Activated CD8-positive, alpha-beta memory T cell treated with anti-CD3 and anti-CD28 coated beads, Interleukin-2, amount 10 ng/mL, durations not matched to agents 7 days and 5 days (primary cell): ENCODE measurements at regions of chr6 and their contacts with region 1.

Region 1: GRCh38 chr6:34610819-34611477 is 54.8 kb upstream of the SPDEF start:
- DNase-seq: no peak
- ATAC-seq: no peak
- H3K4me3 Mint-ChIP-seq: no peak overlapping the region
- H3K27ac Mint-ChIP-seq: no peak overlapping the region
- H3K4me1 Mint-ChIP-seq: peaks cover 19% of the 10 kb centered on the region
- H3K27me3 Mint-ChIP-seq: no peaks in the 10 kb centered on the region

Region 2: GRCh38 chr6:34459899-34460593 is 150.9 kb before region 1 on chr6:
- CTCF ChIA-PET with region 1: interaction called, 60 read pairs
- DNase-seq: peak; percentile 64
- ATAC-seq: peak; percentile 70
- H3K4me3 Mint-ChIP-seq: no peak overlapping the region
- H3K27ac Mint-ChIP-seq: no peak overlapping the region
- H3K4me1 Mint-ChIP-seq: no peaks in the 10 kb centered on the region
- H3K27me3 Mint-ChIP-seq: peaks cover 19% of the 10 kb centered on the region

Region 3: GRCh38 chr6:34465531-34466241 is 145.3 kb before region 1 on chr6 and contains the start of gene PACSIN1:
- CTCF ChIA-PET with region 1: interaction called, 60 read pairs
- DNase-seq: no peak
- ATAC-seq: peak; percentile 69
- H3K4me3 Mint-ChIP-seq: no peak within 1 kb of the TSS
- H3K27ac Mint-ChIP-seq: no peak within 1 kb of the TSS
- H3K4me1 Mint-ChIP-seq: peaks cover 5% of the 10 kb centered on the region
- H3K27me3 Mint-ChIP-seq: peaks cover 37% of the 10 kb centered on the region
- total RNA-seq, gene PACSIN1: 0.59 to 2.2 TPM

Region 4: DNA sequence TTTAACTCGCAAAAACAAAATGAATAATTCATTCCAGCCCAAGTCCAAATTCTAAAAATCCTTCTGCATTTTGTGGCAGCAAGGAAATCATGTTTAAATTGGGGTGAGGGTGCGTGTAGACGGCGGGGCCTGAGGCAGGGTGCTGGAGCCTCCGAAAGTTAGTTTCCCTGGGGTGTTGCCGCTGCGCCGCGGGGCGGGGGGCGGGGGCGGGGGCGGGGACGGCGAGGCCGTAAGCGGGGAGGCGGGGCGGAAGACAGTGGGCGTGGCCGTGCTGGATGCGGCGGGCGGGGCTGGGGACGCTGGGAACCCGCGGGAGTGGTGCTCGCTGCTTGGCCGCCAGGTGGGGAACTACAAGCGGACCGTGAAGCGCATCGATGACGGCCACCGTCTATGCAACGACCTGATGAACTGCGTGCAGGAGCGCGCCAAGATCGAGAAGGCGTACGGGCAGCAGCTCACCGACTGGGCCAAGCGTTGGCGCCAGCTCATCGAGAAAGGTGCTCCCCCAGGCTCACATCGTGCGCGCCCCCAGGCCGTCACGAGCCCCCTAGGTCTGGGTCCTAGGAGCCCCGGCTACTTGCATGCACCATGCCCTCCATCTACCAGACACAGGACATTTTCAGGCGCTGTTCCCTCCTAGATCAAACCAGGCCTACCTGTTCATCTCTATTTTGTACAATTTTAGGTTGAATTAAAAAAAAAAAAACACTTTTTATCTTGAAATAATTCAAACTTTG is 83.8 kb before region 1 on chr6:
- CTCF ChIA-PET with region 1: interaction called, 26 read pairs
- DNase-seq: peak; percentile 96
- ATAC-seq: peak; percentile 98
- H3K4me3 Mint-ChIP-seq: no peak overlapping the region
- H3K27ac Mint-ChIP-seq: no peak overlapping the region
- H3K4me1 Mint-ChIP-seq: peaks cover 5% of the 10 kb centered on the region
- H3K27me3 Mint-ChIP-seq: no peaks in the 10 kb centered on the region

Region 5: GRCh38 chr6:34570066-34570833 is 40.7 kb before region 1 on chr6:
- CTCF ChIA-PET with region 1: interaction called, 10 read pairs
- DNase-seq: no peak
- ATAC-seq: no peak
- H3K4me3 Mint-ChIP-seq: no peak overlapping the region
- H3K27ac Mint-ChIP-seq: no peak overlapping the region
- H3K4me1 Mint-ChIP-seq: no peaks in the 10 kb centered on the region
- H3K27me3 Mint-ChIP-seq: no peaks in the 10 kb centered on the region

Region 6: DNA sequence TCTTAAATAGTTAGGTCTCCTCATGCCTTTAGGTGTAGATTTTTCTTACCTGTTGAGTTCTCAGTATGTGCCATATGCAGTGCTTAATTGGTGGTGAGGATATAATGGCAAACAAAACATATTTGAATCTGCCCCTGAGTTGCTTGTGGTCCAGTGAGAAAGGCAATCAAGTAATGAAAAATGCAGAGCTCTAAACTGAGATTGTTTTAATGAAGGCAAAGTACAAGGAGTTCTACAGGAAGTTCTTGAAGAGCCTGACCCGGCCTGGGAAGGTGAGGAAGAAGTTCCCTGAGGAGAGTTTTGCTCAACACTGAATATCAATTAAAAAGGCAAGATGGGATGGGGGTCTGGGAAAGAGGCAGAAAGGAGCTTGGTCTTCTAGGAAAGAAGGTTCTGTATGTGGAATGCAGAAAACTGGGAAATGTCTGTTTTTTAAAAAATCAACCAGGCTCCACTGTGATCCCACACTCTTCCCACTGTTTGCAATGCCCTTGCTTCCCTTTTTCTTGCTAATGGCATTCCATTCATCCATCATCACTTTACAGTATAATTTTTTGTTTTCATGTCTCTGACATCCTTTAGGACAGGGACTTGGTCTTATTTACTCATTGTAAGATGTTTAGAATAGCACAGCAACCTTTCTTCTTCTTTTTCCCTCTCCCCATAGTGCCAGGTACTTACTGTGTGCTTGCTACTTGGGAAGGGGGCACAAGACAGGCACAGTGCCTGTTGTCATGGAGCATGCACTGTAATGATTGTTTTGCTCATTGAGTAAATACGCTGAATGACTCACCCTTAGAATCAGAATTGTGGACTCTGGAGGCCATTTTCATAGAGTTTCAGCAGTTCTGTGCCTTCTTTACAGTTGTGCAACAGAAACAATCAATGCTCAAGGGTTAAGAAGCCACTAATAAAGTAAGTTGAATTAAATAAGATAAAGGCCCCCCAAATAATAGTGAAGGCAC is 342.4 kb after region 1 on chr6:
- CTCF ChIA-PET with region 1: no interaction called
- DNase-seq: no peak
- ATAC-seq: no peak
- H3K4me3 Mint-ChIP-seq: no peak overlapping the region
- H3K27ac Mint-ChIP-seq: no peak overlapping the region
- H3K4me1 Mint-ChIP-seq: peaks cover 4% of the 10 kb centered on the region
- H3K27me3 Mint-ChIP-seq: no peaks in the 10 kb centered on the region